ACHN (cell line): ENCODE measurements at regions of chr21 and their contacts with region 1.

Region 1: GRCh38 chr21:38159355-38159754 is 97.4 kb upstream of the KCNJ15 start:
- DNase-seq: peak; percentile 61

Region 2: DNA sequence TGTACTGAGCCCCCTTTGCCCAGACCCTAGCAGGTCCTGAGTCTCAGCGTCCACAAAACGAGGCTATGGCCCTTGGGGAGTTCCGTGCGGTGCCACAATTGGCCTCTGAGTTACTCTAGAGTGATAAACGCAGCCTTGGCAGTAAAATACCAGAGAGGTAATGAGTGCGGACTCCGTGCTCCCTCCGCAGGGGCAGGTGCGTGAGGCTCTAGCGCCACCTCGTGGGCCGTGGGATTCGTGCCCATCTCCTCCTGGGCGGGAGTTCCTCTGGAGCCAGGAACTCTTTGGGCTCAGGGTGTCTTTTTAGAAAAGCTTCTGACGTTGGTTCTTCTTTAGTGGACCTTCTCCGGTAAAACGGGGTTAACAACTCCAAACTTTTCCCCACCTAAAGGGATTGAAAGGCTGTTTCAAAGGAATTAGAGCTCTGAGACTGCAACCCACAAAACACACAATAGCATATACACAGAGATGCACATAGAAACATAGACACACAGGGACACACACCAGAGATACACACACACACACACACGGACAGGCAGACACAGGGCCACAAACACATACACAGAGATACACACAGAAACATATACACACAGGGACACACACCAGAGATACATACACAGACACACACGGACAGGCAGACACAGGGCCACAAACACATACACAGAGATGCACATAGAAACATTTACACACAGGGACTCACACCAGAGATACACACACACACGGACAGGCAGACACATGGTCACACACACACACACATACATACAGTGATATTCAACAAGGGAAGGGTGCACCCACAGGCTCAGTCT is 196.8 kb after region 1 on chr21:
- in situ Hi-C with region 1: loop called (anchors 25 kb)
- DNase-seq: peak; percentile 62